ENCODE measurements at regions of chr12 and their contacts with region 1.

Region 1: DNA sequence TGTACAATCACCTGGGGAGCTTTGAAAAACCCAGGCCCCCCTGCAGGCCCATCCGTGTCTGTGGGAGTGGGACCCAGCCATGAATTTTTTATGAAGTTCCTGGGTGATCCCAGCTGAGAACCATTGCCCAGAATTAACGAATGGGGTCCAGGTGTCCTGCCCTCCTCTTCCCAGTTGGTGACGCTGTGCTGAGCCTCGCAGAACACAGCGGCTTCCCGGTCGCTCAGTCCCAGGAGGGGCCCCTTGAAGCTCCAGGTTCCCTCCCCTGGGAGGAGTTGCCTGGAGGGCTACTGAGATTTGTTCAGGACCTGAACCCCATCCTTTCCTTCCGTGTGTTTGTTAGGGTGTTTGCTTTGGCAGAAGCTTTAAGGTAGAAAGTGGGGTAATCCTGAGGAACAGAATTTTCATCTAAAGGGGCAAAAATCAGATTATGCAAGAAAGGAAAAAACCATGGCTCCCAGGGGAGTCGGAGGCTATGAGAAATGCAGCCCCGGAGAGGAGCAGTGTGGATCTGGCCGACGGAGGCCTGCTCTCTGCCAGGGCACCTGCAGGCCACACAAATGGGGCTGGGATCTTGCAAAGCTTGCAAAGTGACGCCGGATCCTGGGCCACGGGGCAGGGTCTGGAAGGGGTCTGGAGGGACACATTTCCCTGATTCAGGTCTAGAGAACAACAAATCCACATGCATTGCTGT is 164.7 kb upstream of the PRMT8 start:
- DNase-seq: peak; percentile 60
- ATAC-seq: peak; percentile 94
- H3K4me3 Mint-ChIP-seq: no peak overlapping the region
- H3K27ac Mint-ChIP-seq: no peak overlapping the region
- H3K4me1 Mint-ChIP-seq: peaks cover 25% of the 10 kb centered on the region
- H3K27me3 Mint-ChIP-seq: no peaks in the 10 kb centered on the region; the same call in 1 of the 2 replicates
- CTCF ChIP-seq: 0 out of 2 replicates have a peak, but pooled peaks have one; percentile 11

Region 2: DNA sequence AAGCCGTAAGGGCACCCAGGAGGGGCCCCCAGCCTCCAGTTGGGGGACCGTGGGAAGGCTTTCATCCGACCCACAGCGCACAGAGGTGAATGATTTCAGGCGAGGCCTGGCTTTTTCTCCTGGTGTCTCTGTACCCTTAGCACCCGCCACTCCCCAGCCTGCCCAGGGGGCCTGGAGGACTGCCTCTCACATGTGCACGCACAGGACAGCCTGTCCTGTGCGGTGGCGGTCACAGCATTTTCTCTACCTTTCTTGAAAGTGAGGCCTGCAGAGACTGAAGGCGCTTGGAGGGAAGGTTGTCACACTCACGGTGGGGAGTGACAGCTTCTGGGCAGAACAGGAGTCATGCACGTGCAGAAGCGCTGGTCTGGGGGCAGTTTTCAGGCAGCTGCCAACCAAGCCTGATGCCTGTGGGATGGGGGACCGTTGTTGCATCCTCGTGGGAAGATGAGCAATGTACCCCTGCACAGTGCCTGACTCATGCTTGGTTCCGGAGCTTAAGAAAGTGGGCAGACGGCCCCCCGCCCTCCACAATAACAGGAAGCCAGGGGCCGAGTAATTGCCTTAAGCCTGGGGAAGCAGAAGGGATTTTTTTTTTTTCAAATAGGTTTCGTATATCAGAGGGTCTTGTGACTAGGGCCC is 101.0 kb before region 1 on chr12:
- CTCF ChIA-PET with region 1: no interaction called
- POLR2A ChIA-PET with region 1: no interaction called
- DNase-seq: no peak
- ATAC-seq: no peak
- H3K4me3 Mint-ChIP-seq: no peak overlapping the region
- H3K27ac Mint-ChIP-seq: no peak overlapping the region
- H3K4me1 Mint-ChIP-seq: peaks cover 33% of the 10 kb centered on the region
- H3K27me3 Mint-ChIP-seq: no peaks in the 10 kb centered on the region
- CTCF ChIP-seq: no peak

Region 3: DNA sequence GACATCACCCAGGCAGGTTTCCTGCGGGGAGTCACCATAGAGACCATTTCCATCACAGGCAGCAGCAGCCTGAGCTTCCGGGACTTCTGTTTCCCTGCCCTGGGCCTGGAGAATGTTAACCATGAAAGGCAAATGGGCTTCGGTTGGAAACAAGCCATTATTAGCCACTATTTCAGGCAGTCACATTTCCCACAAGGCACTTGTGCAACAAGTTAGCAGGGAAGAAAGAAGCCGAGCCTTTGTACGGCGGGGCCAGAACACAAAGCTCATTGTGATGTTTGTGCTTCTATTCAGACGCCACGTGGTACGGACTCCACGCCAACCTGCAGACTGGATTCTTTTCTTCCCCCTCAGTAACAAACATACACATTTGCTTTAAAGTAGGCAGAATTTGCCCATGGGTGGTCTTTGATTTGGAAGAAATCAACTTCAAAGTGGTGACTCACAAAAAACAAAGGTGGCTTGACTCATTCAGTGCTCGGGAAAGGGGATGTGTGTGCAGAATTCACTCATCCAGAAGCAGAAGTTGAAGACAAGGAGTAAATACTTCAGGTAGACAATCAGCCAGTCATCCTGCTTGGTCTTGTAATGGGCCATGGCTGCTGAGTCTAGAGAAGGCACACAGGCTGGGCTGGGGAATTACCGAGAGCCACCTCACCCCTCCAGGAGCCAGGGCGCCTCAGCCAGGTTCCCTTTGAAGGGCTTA is 10.5 kb after region 1 on chr12:
- CTCF ChIA-PET with region 1: interaction called, 20 read pairs
- POLR2A ChIA-PET with region 1: no interaction called
- DNase-seq: no peak
- ATAC-seq: peak; percentile 27; the same call in 1 of the 2 replicates
- H3K4me3 Mint-ChIP-seq: no peak overlapping the region
- H3K27ac Mint-ChIP-seq: no peak overlapping the region
- H3K4me1 Mint-ChIP-seq: peaks cover 22% of the 10 kb centered on the region
- H3K27me3 Mint-ChIP-seq: no peaks in the 10 kb centered on the region; the same call in 1 of the 2 replicates
- CTCF ChIP-seq: no peak

Region 4: DNA sequence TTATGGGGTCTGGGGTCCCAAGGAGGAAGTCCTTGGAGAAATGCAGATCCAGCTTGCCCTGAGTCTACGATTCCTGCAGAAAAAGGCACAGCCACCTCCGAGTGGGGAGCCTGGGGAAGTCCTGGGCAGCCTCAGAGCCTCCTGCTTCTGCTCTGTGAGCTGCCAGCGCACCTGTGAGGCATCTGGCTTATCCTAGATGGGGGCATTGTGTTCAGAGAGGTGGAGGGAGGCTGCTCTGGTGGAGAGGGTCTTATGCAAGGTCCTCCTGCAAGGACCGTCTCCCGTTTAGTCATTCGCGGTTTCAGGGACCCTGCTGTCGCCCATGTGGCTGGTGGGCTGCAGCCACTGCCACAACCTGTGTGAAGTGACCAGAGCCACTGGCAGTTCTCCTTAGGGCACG is 111.7 kb after region 1 on chr12:
- CTCF ChIA-PET with region 1: no interaction called
- POLR2A ChIA-PET with region 1: no interaction called
- DNase-seq: no peak
- ATAC-seq: no peak
- H3K4me3 Mint-ChIP-seq: no peak overlapping the region
- H3K27ac Mint-ChIP-seq: no peak overlapping the region
- H3K4me1 Mint-ChIP-seq: peaks cover 16% of the 10 kb centered on the region
- H3K27me3 Mint-ChIP-seq: no peaks in the 10 kb centered on the region
- CTCF ChIP-seq: no peak

Region 5: DNA sequence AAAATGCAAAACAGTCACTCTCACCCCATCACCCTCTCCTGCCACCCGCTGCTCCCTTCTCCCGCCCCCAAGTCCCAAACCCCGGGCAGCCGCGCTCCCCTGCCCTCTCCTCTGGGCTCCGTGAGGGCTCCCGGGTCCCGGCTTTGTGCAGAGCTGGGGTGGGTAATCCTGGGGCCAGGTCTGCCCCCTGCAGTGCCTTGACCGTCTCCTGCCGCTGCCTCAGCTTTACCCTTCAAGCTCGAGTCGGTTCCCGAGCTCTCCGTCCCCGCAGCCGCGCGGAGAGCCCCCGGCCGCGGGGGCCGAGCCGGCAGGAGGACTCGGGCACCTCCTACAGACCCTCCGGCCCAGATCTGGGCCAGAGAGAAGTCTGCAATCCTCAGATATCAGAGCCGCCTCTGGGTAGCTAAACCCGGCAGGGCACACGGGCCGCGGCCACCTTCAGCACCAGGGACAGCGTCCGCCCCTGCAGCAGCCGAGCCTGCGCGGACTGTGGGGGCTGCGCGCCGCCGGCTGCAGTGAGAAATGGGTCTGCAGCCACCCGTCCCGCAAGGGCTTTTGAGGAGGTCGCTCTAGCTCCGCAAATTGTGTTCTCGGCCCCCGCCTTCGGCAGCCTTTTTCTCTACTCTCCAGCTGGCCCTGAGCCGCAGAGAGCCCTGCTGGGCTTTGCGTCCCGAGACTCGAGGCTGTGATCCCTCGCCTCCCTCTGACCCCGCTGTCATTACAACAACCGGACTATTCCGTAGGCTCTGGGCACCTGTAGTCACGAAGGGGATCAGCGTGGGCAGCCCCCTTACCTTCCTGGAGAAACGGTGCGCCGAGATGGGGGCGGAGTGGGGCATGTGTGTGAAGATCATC is 165.9 kb after region 1 on chr12:
- CTCF ChIA-PET with region 1: interaction called, 12 read pairs
- POLR2A ChIA-PET with region 1: no interaction called
- DNase-seq: peak; percentile 84
- ATAC-seq: peak; percentile 77
- H3K4me3 Mint-ChIP-seq: peak overlapping the region; percentile 68
- H3K27ac Mint-ChIP-seq: no peak overlapping the region
- H3K4me1 Mint-ChIP-seq: peaks cover 49% of the 10 kb centered on the region
- H3K27me3 Mint-ChIP-seq: peaks cover 88% of the 10 kb centered on the region
- CTCF ChIP-seq: no peak

Measured in WTC11 (cell line).